Body of pancreas (tissue), 4 donors: ENCODE measurements at regions of chr11 and their contacts with region 1.

Region 1: GRCh38 chr11:83162377-83162776 is 5.4 kb downstream of the PCF11 start:
- DNase-seq: no peak
- ATAC-seq: no peak
- H3K4me3 ChIP-seq: no peak overlapping the region
- H3K27ac ChIP-seq: peak overlapping the region in 1 of 4 donors; percentile 100
- H3K4me1 ChIP-seq: peaks cover 37% of the 10 kb centered on the region
- H3K27me3 ChIP-seq: no peaks in the 10 kb centered on the region
- CTCF ChIP-seq: no peak
- POLR2A ChIP-seq: no peak

Region 2: DNA sequence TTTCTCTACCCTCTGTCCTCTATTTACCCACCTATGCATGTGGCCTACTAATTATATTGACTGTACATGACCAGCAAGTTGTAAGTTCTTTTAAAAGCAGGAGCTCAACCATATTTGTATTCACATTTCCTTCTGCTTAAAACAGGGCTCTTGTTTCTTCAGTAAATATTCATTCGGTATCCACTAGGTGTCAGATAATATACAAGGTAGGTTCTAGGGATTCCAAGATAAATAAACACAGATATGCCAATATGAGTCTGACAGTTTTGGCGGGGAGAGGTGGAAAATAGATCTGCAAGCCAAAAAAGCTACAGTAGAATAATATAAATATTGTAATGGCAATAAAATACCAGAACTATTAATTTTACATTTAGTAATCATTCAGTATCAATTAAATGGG is 75.3 kb before region 1 on chr11:
- intact Hi-C with region 1: loop called (anchors 10 kb)
- DNase-seq: peak in 2 of 4 donors; percentile 22 to 40
- ATAC-seq: peak; percentile 78
- H3K4me3 ChIP-seq: no peak overlapping the region
- H3K27ac ChIP-seq: peak overlapping the region in 1 of 4 donors; percentile 37
- H3K4me1 ChIP-seq: peaks cover 26% of the 10 kb centered on the region
- H3K27me3 ChIP-seq: no peaks in the 10 kb centered on the region
- CTCF ChIP-seq: peak in 6 of 7 experiments; percentile 19 to 62 (median 54)
- POLR2A ChIP-seq: no peak